Ascending aorta (tissue), 2 donors: ENCODE measurements at regions of chr12 and their contacts with region 1.

Region 1: DNA sequence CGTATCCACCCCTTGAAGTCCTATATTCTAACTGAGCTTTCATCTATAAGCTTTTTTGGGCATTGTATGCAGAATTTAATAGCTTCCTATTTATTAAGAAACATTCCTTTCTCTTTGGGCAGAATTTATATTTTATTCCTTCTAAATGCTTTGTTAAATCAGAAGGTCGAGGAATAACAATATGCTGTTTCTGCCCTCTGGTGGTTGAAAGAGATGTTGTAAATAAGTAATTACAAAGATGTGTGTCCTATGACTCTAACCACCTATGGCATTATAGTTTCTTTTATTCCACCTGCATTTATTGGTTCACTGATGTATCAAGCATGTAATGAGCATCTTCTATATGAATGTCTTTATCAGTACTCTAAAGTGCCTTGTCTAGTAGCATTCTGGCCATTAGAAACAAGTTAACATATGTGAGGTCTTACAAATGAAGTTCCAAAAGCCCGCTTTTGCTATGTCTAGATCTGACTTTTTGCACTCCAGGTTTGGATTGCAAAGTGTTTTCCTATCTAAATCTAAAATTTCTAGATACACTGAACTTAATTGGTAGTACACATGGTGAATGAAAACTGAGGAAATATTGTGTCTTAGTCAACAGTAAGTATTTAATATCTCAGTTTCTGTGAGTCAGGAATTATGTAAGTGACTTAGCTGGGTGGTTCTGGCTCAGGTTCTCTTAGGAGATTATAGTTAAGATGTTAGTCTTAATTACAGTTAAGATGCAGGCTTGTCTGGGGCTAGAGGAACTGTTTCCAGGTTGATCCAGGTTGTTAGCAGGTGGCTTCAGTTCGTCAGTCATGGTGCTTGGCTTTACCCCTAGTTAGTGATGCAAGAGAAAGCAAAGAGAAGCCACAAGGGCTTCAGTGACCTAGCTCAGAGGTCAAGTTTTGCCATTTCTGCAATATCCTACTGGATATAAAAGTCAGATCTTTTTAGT is 57.5 kb downstream of the PLEKHA5 start:
- DNase-seq: no peak
- H3K4me3 ChIP-seq: peak overlapping the region in 1 of 2 donors; percentile 33
- H3K27ac ChIP-seq: peak overlapping the region in 1 of 2 donors; percentile 43
- H3K4me1 ChIP-seq: peaks cover 7 to 43% of the 10 kb centered on the region in 2 donors
- H3K27me3 ChIP-seq: no peaks in the 10 kb centered on the region
- CTCF ChIP-seq: peak in 2 of 3 experiments; percentile 37 to 50

Region 2: DNA sequence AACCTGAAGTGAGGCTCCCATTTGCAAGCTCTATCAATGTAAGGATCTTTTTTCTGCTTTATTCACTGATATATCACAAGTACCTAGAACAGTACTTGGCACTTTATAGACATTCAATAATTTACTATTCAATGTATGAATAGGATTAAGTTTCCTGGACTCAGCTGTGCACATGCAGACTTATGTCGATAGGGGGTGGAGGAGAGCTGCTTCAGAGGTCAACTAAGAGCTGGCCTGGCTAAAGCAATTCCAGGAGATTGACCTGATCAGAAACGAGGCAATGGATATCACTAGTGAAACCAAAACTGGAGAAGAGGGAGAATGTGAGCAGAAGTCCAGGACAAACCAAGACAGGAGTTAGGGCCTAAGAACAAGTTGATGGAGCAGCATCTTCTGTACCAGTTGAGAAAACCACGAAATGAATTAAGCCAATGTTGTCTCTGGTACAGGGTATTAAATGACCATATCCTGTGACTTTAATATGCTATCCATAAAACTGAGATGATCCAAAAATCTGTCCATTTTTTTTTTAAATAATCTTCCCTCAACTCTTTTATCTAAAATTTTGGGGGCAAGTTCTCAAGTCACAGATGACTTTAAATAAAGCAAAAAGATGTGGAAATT is 756.5 kb before region 1 on chr12:
- intact Hi-C with region 1: loop called (anchors 5 kb)
- DNase-seq: no peak
- H3K4me3 ChIP-seq: no peak overlapping the region
- H3K27ac ChIP-seq: no peak overlapping the region
- H3K4me1 ChIP-seq: no peaks in the 10 kb centered on the region
- H3K27me3 ChIP-seq: no peaks in the 10 kb centered on the region
- CTCF ChIP-seq: peak in 2 of 3 experiments; percentile 44 to 57

Region 3: GRCh38 chr12:19227190-19227879 is 40.3 kb after region 1 on chr12:
- intact Hi-C with region 1: loop called (anchors 5 kb)
- DNase-seq: no peak
- H3K4me3 ChIP-seq: no peak overlapping the region
- H3K27ac ChIP-seq: no peak overlapping the region
- H3K4me1 ChIP-seq: peaks cover 0 to 12% of the 10 kb centered on the region in 2 donors
- H3K27me3 ChIP-seq: no peaks in the 10 kb centered on the region
- CTCF ChIP-seq: no peak

Region 4: GRCh38 chr12:19239616-19240234 is 52.7 kb after region 1 on chr12:
- intact Hi-C with region 1: no loop called
- DNase-seq: no peak
- H3K4me3 ChIP-seq: no peak overlapping the region
- H3K27ac ChIP-seq: no peak overlapping the region
- H3K4me1 ChIP-seq: peaks cover 6 to 51% of the 10 kb centered on the region in 2 donors
- H3K27me3 ChIP-seq: no peaks in the 10 kb centered on the region
- CTCF ChIP-seq: no peak